B cell (primary cell): ENCODE measurements at regions of chr14 and their contacts with region 1.

Region 1: GRCh38 chr14:105589161-105590062 is 63.0 kb downstream of the TMEM121 start:
- DNase-seq: peak; percentile 23
- ATAC-seq: no peak
- H3K4me3 ChIP-seq: no peak overlapping the region
- H3K4me3 Mint-ChIP-seq: peak overlapping the region; percentile 44
- H3K27ac ChIP-seq: peak overlapping the region; percentile 36 to 67
- H3K27ac Mint-ChIP-seq: peak overlapping the region; percentile 78
- H3K4me1 ChIP-seq: peaks cover 23 to 56% of the 10 kb centered on the region in 2 donors
- H3K4me1 Mint-ChIP-seq: peaks cover 33% of the 10 kb centered on the region
- H3K27me3 ChIP-seq: no peaks in the 10 kb centered on the region
- H3K27me3 Mint-ChIP-seq: no peaks in the 10 kb centered on the region
- CTCF ChIP-seq: no peak

Region 2: GRCh38 chr14:105144666-105145380 is 444.6 kb before region 1 on chr14:
- CTCF ChIA-PET with region 1: no interaction called
- POLR2A ChIA-PET with region 1: interaction called, 10 read pairs
- intact Hi-C with region 1: no loop called
- DNase-seq: no peak
- ATAC-seq: no peak
- H3K4me3 ChIP-seq: no peak overlapping the region
- H3K4me3 Mint-ChIP-seq: no peak overlapping the region
- H3K27ac ChIP-seq: no peak overlapping the region
- H3K27ac Mint-ChIP-seq: no peak overlapping the region
- H3K4me1 ChIP-seq: no peaks in the 10 kb centered on the region
- H3K4me1 Mint-ChIP-seq: no peaks in the 10 kb centered on the region
- H3K27me3 ChIP-seq: no peaks in the 10 kb centered on the region
- H3K27me3 Mint-ChIP-seq: no peaks in the 10 kb centered on the region
- CTCF ChIP-seq: no peak

Region 3: GRCh38 chr14:105709281-105710118 is 120.1 kb after region 1 on chr14:
- CTCF ChIA-PET with region 1: no interaction called
- POLR2A ChIA-PET with region 1: interaction called, 10 read pairs
- intact Hi-C with region 1: no loop called
- DNase-seq: peak; percentile 22
- ATAC-seq: no peak
- H3K4me3 ChIP-seq: peak overlapping the region in 4 of 5 experiments; percentile 45 to 61 (median 52)
- H3K4me3 Mint-ChIP-seq: peak overlapping the region; percentile 82
- H3K27ac ChIP-seq: peak overlapping the region; percentile 80 to 90
- H3K27ac Mint-ChIP-seq: peak overlapping the region; percentile 88
- H3K4me1 ChIP-seq: peaks cover 31 to 69% of the 10 kb centered on the region in 2 donors
- H3K4me1 Mint-ChIP-seq: peaks cover 45% of the 10 kb centered on the region
- H3K27me3 ChIP-seq: no peaks in the 10 kb centered on the region
- H3K27me3 Mint-ChIP-seq: no peaks in the 10 kb centered on the region
- CTCF ChIP-seq: no peak